ENCODE measurements at regions of chr6 and their contacts with region 1.

Region 1: DNA sequence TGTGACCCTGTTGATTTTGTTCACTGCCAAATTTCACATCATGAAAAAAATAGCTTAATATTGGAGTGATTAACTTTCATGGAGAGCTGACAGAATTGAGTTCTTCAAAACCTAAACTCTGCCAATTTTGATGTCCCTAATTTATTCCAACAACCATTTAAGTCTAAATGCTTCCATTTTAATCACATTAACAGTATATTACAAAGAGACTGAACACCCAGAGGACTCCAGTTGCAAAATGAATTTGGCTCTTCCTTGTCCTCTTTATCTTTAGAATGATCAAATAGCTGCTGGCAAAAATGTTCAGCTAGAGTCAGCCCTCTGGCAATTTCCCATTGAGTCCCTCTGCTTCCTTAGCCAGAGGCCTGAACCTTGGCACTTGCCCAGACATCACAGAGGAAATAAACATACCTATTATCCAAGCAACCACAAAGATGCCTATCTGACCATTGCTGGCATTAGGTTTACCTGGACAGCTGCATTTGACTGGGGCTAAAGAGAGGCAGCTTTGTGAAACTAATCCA is 299.0 kb upstream of the STXBP5 start:
- DNase-seq: peak; percentile 90
- H3K4me3 Mint-ChIP-seq: no peak overlapping the region
- H3K27ac Mint-ChIP-seq: no peak overlapping the region
- H3K4me1 Mint-ChIP-seq: peaks cover 14% of the 10 kb centered on the region
- H3K27me3 Mint-ChIP-seq: no peaks in the 10 kb centered on the region
- CTCF ChIP-seq: no peak

Region 2: GRCh38 chr6:146892613-146893401 is 12.4 kb before region 1 on chr6:
- CTCF ChIA-PET with region 1: interaction called, 20 read pairs
- POLR2A ChIA-PET with region 1: interaction called, 6 read pairs
- intact Hi-C with region 1: no loop called
- DNase-seq: no peak
- H3K4me3 Mint-ChIP-seq: no peak overlapping the region
- H3K27ac Mint-ChIP-seq: no peak overlapping the region
- H3K4me1 Mint-ChIP-seq: peaks cover 12% of the 10 kb centered on the region
- H3K27me3 Mint-ChIP-seq: no peaks in the 10 kb centered on the region
- CTCF ChIP-seq: no peak

Region 3: DNA sequence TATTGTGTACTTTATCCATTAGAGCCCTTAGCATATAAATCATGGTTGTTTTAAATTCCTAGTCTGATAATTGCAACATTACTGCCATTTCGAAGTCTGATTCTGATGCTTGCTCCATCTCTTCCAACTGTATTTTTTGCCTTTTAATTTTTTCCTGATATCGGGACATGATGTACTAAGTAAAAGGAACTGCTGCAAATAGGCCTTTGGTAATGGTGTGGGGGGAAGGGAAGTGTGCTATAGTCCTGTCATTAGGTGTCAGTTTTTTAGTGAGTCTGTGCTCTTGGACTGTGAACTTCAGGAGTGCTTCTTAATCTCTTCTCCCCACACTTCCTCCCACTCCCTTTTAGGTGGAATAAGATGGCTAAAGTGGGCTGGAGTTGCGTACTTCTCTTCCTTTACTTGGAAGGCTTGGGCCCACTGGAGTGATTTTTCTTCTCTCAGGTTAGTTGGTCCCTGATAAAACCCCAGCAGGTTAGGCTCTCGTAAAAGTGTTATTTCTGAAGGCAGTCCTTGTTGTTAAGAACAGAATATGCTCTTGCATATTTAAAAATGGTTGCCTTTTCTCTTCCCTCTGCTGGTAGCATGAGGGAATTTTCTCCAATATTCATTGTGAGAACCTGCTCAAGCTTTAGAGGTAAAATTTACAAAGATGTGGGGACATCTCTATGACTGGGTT is 317.1 kb after region 1 on chr6:
- CTCF ChIA-PET with region 1: interaction called, 26 read pairs
- POLR2A ChIA-PET with region 1: interaction called, 4 read pairs
- intact Hi-C with region 1: loop called (anchors 1 kb)
- DNase-seq: peak; percentile 24
- H3K4me3 Mint-ChIP-seq: no peak overlapping the region
- H3K27ac Mint-ChIP-seq: peak overlapping the region; percentile 37
- H3K4me1 Mint-ChIP-seq: peaks cover 39% of the 10 kb centered on the region
- H3K27me3 Mint-ChIP-seq: no peaks in the 10 kb centered on the region
- CTCF ChIP-seq: peak; percentile 27

Region 4: GRCh38 chr6:147285087-147285855 is 380.0 kb after region 1 on chr6:
- CTCF ChIA-PET with region 1: interaction called, 30 read pairs
- POLR2A ChIA-PET with region 1: interaction called, 4 read pairs
- intact Hi-C with region 1: loop called (anchors 1 kb)
- DNase-seq: peak; percentile 59
- H3K4me3 Mint-ChIP-seq: no peak overlapping the region
- H3K27ac Mint-ChIP-seq: peak overlapping the region; percentile 73
- H3K4me1 Mint-ChIP-seq: peaks cover 31% of the 10 kb centered on the region
- H3K27me3 Mint-ChIP-seq: no peaks in the 10 kb centered on the region
- CTCF ChIP-seq: peak; percentile 38

Region 5: GRCh38 chr6:147382945-147383554 is 477.8 kb after region 1 on chr6:
- CTCF ChIA-PET with region 1: interaction called, 30 read pairs
- POLR2A ChIA-PET with region 1: interaction called, 6 read pairs
- intact Hi-C with region 1: loop called (anchors 5 kb)
- DNase-seq: peak; percentile 50
- H3K4me3 Mint-ChIP-seq: no peak overlapping the region
- H3K27ac Mint-ChIP-seq: no peak overlapping the region
- H3K4me1 Mint-ChIP-seq: no peaks in the 10 kb centered on the region
- H3K27me3 Mint-ChIP-seq: no peaks in the 10 kb centered on the region
- CTCF ChIP-seq: peak; percentile 51

Region 6: GRCh38 chr6:148166339-148166968 is 1261.2 kb after region 1 on chr6:
- CTCF ChIA-PET with region 1: interaction called, 6 read pairs
- POLR2A ChIA-PET with region 1: no interaction called
- intact Hi-C with region 1: loop called (anchors 1 kb)
- DNase-seq: peak; percentile 71
- H3K4me3 Mint-ChIP-seq: no peak overlapping the region
- H3K27ac Mint-ChIP-seq: no peak overlapping the region
- H3K4me1 Mint-ChIP-seq: no peaks in the 10 kb centered on the region
- H3K27me3 Mint-ChIP-seq: no peaks in the 10 kb centered on the region
- CTCF ChIP-seq: peak; percentile 63

Measured in MCF 10A (cell line).